Activated naive CD4-positive, alpha-beta T cell treated with anti-CD3 and anti-CD28 coated beads, Interleukin-2, amount 10 ng/mL, durations not matched to agents 7 days and 5 days (primary cell): ENCODE measurements at regions of chr16 and their contacts with region 1.

Region 1: DNA sequence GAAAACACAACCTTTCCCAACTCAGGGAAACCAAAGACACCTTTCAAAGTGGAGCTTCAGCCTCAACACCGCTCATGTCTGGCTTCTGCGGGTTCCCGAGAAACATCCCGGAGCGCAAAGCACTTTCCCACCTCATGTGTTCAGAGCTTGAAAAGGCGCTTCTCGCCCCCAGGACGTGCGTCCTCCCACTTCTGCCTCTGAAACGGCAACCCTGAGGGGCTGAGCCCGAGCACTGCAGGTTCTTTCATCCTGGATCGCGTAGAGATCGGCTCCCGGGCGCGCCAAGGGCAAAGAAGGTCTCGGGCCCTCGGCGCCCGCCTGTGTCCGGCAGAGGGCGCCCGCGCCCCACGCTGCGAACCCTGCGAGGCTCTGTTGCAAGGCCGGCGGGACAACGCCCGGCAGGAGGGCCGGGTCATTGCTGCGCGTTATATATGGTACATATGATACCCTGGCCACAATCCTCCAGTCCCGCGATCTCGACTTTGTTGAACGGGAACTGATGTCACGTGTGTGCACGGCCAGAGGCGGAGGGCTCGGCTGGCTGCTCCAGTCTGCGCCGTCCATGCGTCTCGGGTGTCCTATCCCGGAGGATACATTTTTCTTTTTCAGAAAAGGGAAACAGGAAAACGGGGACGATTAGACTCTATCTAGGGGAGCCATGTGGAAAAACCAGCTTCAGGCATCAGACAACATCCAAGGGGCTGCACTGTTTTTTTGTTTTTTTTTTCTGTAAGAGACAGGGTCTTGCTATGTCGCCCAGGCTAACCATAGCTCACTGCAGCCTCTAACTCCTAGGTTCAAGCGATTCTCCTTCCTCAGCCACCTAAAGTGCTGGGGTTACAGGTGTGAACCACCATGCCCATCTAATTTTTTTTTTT is 19.1 kb downstream of the COQ7 start:
- DNase-seq: peak; percentile 80
- H3K4me3 Mint-ChIP-seq: peak overlapping the region; percentile 38
- H3K27ac Mint-ChIP-seq: no peak overlapping the region
- H3K4me1 Mint-ChIP-seq: peaks cover 6% of the 10 kb centered on the region
- H3K27me3 Mint-ChIP-seq: peaks cover 38% of the 10 kb centered on the region

Region 2: GRCh38 chr16:19116707-19117449 is 30.3 kb after region 1 on chr16:
- CTCF ChIA-PET with region 1: interaction called, 10 read pairs
- DNase-seq: no peak
- H3K4me3 Mint-ChIP-seq: no peak overlapping the region
- H3K27ac Mint-ChIP-seq: peak overlapping the region; percentile 49
- H3K4me1 Mint-ChIP-seq: peaks cover 15% of the 10 kb centered on the region
- H3K27me3 Mint-ChIP-seq: peaks cover 61% of the 10 kb centered on the region

Region 3: DNA sequence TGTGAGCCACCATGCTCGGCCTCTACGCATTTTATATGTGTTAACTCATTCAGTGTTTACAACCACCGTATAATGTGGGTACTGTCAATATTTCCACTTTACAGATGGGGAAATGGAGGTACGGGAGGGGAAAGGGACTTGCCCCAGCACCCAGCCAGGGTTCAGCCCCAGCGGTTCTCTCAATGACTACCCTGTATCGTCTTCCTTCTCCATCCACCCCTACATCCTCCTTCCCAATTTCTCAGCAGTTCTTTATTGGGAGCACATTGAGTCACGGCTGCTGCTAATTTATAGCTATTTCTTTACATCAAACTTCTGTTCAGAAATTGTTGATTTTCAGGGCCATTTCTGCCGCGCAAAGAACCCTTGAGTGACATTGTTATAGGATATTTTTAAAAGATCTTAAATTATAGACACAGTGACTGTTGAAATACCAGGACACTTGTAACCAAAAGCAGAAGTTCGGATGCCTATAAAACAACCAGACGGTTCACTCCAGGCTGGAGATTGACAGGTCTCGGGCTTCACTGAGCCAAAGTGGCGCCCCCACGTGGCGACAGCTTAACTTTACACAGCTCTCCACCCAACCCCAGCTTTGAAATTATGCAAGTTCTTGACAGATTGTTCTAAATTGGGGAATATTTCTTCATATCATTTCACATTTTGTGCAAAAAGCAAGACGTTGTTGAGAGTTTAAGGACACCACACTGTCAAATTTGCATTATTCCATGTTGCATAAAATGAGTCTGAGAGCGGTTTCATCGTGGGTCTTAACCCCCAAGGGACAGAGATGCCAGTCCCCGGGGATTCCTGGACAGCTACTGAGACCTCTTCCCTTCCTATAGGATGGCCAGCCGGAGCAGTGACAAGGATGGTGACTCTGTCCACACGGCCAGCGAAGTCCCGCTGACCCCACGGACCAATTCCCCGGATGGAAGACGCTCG is 93.3 kb after region 1 on chr16:
- CTCF ChIA-PET with region 1: interaction called, 76 read pairs
- DNase-seq: peak; percentile 28
- H3K4me3 Mint-ChIP-seq: no peak overlapping the region
- H3K27ac Mint-ChIP-seq: no peak overlapping the region
- H3K4me1 Mint-ChIP-seq: no peaks in the 10 kb centered on the region
- H3K27me3 Mint-ChIP-seq: no peaks in the 10 kb centered on the region

Region 4: DNA sequence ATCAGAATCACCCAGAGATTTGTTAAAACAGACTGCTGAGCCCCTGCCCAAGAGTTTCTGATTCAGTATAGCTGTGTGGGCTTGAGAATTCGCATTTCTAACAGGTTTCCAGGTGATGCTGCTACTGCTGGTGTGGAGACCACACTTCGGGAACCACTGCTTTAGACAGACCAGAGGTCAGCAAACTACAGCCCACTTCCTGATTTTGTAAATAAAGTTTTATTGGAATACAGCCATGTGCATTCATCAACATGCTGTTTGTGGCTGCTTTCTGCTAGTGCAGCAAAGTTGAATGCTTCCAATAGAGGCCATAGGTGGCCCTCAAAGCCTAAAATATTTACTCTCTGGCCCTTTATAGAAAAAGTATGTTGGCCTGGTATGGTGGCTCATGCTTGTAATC is 166.3 kb after region 1 on chr16:
- CTCF ChIA-PET with region 1: no interaction called
- DNase-seq: no peak
- H3K4me3 Mint-ChIP-seq: no peak overlapping the region
- H3K27ac Mint-ChIP-seq: no peak overlapping the region
- H3K4me1 Mint-ChIP-seq: no peaks in the 10 kb centered on the region
- H3K27me3 Mint-ChIP-seq: peaks cover 3% of the 10 kb centered on the region